Activated CD4-positive, alpha-beta T cell treated with anti-CD3 and anti-CD28 coated beads, Interleukin-2, amount 10 ng/mL, durations not matched to agents 24 days and 14 days (primary cell): ENCODE measurements at regions of chr1 and their contacts with region 1.

Region 1: DNA sequence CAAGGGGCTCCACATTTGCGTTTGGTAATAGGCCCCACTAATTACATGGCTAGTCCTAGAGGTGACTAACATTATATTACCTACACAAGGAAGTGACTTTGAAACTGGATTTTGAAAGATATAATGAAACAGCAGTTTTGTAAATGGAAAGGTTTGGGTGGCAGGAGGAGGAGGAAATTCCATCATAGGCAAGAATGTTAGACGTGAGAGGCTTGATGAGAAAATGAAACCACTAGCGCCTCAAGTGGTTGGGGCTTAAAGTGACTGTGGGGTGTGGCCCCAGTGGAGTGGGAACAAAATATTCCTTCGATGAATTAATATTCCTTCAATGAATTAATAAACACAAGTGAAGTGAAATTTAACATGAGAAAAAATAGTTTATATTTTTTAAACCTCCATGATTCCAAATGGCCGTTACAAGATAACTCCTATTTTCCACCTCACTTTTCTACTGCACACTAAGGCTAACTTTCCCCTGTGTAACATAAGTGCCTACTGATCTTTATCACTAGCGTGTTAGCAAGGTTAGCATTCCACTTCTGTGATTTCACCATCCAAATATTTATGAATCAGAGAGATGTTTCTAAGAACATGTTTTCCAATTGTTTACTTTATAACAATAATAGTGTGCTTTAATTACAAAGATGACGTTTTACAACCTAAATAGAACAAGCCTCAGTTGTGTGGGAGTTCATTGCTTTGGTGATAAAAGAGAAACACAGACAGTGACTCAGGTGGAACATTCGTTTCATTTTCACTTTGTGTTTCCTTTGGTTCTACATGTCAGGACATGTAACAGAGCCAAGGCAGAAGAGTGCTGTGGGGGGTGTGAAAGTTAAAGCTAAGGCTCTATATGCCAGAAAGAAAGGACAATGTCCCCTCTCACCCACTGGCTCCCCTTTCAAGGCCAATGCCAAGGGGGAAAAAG is 12.5 kb upstream of the ATF3 start:
- DNase-seq: peak; percentile 90
- H3K4me3 Mint-ChIP-seq: peak overlapping the region; percentile 50
- H3K27ac Mint-ChIP-seq: peak overlapping the region; percentile 94
- H3K4me1 Mint-ChIP-seq: peaks cover 29% of the 10 kb centered on the region
- H3K27me3 Mint-ChIP-seq: peaks cover 22% of the 10 kb centered on the region

Region 2: GRCh38 chr1:212514056-212514614 is 81.9 kb before region 1 on chr1:
- intact Hi-C with region 1: no loop called
- DNase-seq: peak; percentile 62
- H3K4me3 Mint-ChIP-seq: no peak overlapping the region
- H3K27ac Mint-ChIP-seq: no peak overlapping the region
- H3K4me1 Mint-ChIP-seq: no peaks in the 10 kb centered on the region
- H3K27me3 Mint-ChIP-seq: peaks cover 68% of the 10 kb centered on the region

Region 3: GRCh38 chr1:212558693-212559480 is 37.2 kb before region 1 on chr1:
- intact Hi-C with region 1: loop called (anchors 2 kb)
- DNase-seq: peak; percentile 97
- H3K4me3 Mint-ChIP-seq: peak overlapping the region; percentile 72
- H3K27ac Mint-ChIP-seq: peak overlapping the region; percentile 95
- H3K4me1 Mint-ChIP-seq: peaks cover 7% of the 10 kb centered on the region
- H3K27me3 Mint-ChIP-seq: peaks cover 34% of the 10 kb centered on the region

Region 4: GRCh38 chr1:212566522-212567479 is 29.2 kb before region 1 on chr1:
- intact Hi-C with region 1: loop called (anchors 1 kb)
- DNase-seq: peak; percentile 86
- H3K4me3 Mint-ChIP-seq: peak overlapping the region; percentile 81
- H3K27ac Mint-ChIP-seq: peak overlapping the region; percentile 89
- H3K4me1 Mint-ChIP-seq: peaks cover 27% of the 10 kb centered on the region
- H3K27me3 Mint-ChIP-seq: peaks cover 35% of the 10 kb centered on the region